ENCODE measurements at regions of chr7 and their contacts with region 1.

Region 1: DNA sequence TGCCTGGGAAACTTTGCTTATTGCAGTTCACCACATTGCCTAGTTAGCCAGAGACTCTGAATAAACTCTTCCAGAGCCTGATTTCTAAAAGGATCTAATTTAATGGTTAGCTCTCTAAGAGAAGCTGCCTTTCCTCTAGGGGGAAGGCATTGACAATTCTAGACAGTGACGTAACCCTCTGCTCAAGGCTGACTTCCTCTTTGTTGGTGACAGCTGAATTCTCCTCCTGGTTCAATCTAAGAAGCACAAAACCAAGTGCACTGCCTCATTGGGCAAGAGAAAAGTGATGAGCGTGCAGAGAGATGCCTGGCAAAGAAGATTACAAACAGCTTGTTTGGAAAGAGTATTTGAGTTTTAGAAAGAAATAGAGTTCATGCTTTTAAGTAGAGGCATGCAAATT is 102.7 kb downstream of the MACC1 start:
- DNase-seq: peak; percentile 62
- ATAC-seq: peak; percentile 91
- H3K4me3 ChIP-seq: no peak overlapping the region
- H3K27ac ChIP-seq: no peak overlapping the region
- H3K4me1 ChIP-seq: peaks cover 21% of the 10 kb centered on the region
- H3K27me3 ChIP-seq: no peaks in the 10 kb centered on the region
- CTCF ChIP-seq: no peak; a peak in 1 of 6 replicates
- EP300 ChIP-seq: no peak
- POLR2A ChIP-seq: no peak
- RAD21 ChIP-seq: 0 out of 2 replicates have a peak, but pooled peaks have one; percentile 11

Region 2: DNA sequence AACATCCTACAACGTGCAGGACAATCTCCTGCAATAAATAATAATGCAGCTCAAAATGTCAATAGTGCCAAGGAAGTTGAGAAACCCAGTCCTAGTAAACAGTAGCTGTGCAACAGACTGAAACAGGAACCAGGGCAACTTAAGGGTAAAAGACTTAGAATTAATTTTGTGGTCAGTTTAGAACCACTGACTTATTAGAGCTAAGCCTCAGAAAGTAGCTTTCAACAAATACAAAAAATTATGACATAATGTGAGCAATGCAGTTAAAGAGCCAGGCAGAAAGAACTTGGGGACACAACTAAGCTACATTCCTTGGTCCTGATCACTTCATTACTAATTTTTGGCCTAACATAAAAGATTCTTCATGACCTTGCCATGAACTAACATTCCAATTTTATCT is 92.6 kb before region 1 on chr7:
- CTCF ChIA-PET with region 1: interaction called, 11 read pairs
- POLR2A ChIA-PET with region 1: interaction called, 6 read pairs
- RAD21 ChIA-PET with region 1: interaction called, 6 read pairs
- SMC1A ChIA-PET with region 1: interaction called, 10 read pairs
- in situ Hi-C with region 1: no loop called
- intact Hi-C with region 1: no loop called
- DNase-seq: peak; percentile 48
- ATAC-seq: peak; percentile 91
- H3K4me3 ChIP-seq: no peak overlapping the region
- H3K27ac ChIP-seq: no peak overlapping the region
- H3K4me1 ChIP-seq: peaks cover 18% of the 10 kb centered on the region
- H3K27me3 ChIP-seq: no peaks in the 10 kb centered on the region
- CTCF ChIP-seq: no peak
- EP300 ChIP-seq: no peak; a peak in 1 of 4 replicates
- POLR2A ChIP-seq: no peak
- RAD21 ChIP-seq: no peak

Region 3: GRCh38 chr7:20030915-20031362 is 83.5 kb before region 1 on chr7:
- CTCF ChIA-PET with region 1: interaction called, 6 read pairs
- POLR2A ChIA-PET with region 1: no interaction called
- RAD21 ChIA-PET with region 1: interaction called, 14 read pairs
- SMC1A ChIA-PET with region 1: interaction called, 5 read pairs
- in situ Hi-C with region 1: no loop called
- intact Hi-C with region 1: no loop called
- DNase-seq: peak; percentile 50
- ATAC-seq: peak; percentile 74
- H3K4me3 ChIP-seq: peak overlapping the region; percentile 35; the same call in 1 of the 2 replicates
- H3K27ac ChIP-seq: peak overlapping the region; percentile 54
- H3K4me1 ChIP-seq: peaks cover 19% of the 10 kb centered on the region
- H3K27me3 ChIP-seq: no peaks in the 10 kb centered on the region
- CTCF ChIP-seq: no peak
- EP300 ChIP-seq: 0 out of 4 replicates have a peak, but pooled peaks of 1 of the 2 experiments have one; percentile 7
- POLR2A ChIP-seq: no peak
- RAD21 ChIP-seq: no peak

Region 4: DNA sequence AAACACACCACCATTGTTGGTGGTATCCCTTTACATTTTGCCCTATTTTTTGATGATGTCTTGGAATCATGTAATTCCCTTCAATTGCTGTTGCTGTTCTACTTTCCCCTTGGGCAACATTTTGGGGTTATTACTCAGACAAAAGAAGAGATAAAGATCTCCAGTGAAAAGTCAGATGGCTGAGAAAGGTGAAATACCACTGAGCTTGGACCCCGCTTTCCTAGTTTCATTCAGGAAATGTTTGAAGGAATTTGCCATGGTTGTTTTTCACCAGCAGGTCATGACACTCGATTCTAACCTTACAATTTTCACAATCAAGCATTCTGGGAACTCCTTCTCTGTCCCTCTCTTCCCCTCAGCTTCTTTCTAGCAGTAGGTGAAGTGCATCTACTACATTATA is 18.2 kb after region 1 on chr7:
- CTCF ChIA-PET with region 1: interaction called, 8 read pairs
- POLR2A ChIA-PET with region 1: interaction called, 5 read pairs
- RAD21 ChIA-PET with region 1: interaction called, 3 read pairs
- SMC1A ChIA-PET with region 1: interaction called, 28 read pairs
- in situ Hi-C with region 1: no loop called
- intact Hi-C with region 1: no loop called
- DNase-seq: no peak
- ATAC-seq: no peak
- H3K4me3 ChIP-seq: no peak overlapping the region
- H3K27ac ChIP-seq: no peak overlapping the region
- H3K4me1 ChIP-seq: no peaks in the 10 kb centered on the region
- H3K27me3 ChIP-seq: no peaks in the 10 kb centered on the region
- CTCF ChIP-seq: no peak
- EP300 ChIP-seq: no peak
- POLR2A ChIP-seq: no peak
- RAD21 ChIP-seq: no peak

Region 5: DNA sequence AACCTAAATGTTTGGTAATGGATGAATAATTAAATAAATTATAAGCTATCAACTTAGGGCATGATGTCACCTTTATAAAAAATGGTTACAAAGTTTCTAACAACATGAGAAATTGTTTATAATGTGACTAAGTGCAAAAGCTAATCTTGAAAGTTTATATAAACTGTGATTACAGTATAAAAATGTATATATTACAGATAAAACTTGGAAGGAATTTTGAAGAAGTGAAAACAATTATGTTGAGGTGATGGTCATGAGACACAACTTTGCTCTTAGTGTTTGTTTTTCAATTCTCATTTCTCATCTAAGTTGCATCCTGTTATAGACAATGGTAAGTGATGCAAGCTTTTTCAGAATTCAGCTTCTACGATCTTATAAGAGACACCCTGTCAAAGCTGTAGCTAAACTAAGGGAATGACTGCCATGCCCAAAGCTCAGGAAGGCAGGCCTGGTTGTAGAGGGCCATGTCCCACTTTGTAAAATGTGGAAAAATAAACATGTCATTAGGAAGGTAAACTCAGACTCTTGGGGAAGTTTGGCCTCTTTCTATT is 78.8 kb after region 1 on chr7:
- CTCF ChIA-PET with region 1: interaction called, 8 read pairs
- POLR2A ChIA-PET with region 1: no interaction called
- RAD21 ChIA-PET with region 1: interaction called, 6 read pairs
- SMC1A ChIA-PET with region 1: interaction called, 11 read pairs
- in situ Hi-C with region 1: no loop called
- intact Hi-C with region 1: no loop called
- DNase-seq: no peak
- ATAC-seq: peak; percentile 83
- H3K4me3 ChIP-seq: no peak overlapping the region
- H3K27ac ChIP-seq: peak overlapping the region; percentile 63
- H3K4me1 ChIP-seq: peaks cover 24% of the 10 kb centered on the region
- H3K27me3 ChIP-seq: no peaks in the 10 kb centered on the region
- CTCF ChIP-seq: no peak
- EP300 ChIP-seq: peak; percentile 48 to 58; a peak in 2 of 4 replicates
- POLR2A ChIP-seq: no peak
- RAD21 ChIP-seq: no peak